Ovary (tissue), 10 donors: ENCODE measurements at regions of chr7 and their contacts with region 1.

Region 1: DNA sequence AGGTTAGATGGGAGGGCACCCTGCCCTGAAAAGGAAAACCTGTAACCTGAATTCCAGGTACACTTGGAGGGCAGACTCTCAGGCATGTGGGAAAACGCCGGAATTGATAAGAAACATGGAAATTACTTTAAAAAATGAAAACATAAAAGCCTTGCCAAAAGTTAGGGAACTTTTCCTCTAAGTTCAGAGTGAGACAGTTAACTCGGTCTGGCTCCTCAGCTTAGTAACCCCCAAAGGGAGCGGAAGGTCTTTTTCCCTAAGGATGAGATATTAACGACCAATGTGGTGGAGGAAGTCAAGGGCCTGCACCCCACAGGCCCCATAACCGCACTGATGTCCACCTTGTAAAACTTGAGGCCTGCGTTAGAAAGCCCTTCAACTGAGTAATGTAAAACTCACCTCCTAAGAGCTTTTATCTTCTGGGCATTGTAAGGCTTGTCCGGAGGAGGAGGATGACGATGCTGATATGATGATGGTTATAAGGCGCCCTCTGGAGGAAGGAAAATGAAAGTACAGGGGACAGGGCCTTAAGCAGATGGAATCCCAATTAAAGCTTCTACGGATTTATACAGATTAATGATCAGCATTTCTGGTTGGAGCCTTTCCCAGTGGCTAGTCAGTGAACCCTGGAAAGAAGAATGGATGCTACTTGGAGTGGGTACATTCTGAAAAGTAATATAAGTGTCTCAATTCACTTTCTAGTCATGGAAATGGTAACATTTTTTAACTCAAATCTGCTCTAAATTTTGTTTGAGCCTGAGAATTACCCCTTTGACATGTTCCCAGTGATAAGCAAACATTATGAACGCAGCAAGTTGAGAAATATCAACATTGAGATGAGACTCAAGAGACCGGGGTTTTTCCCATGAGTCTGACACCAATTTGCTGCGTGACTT is 694 bp downstream of the COL1A2 start:
- DNase-seq: peak; percentile 48 to 80 (median 55)
- H3K4me3 ChIP-seq: peak overlapping the region; percentile 57
- H3K27ac ChIP-seq: peak overlapping the region; percentile 61 to 93
- H3K4me1 ChIP-seq: peaks cover 5% of the 10 kb centered on the region
- H3K27me3 ChIP-seq: no peaks in the 10 kb centered on the region
- CTCF ChIP-seq: peak; percentile 75 to 96 (median 87)
- EP300 ChIP-seq: peak; percentile 13
- POLR2A ChIP-seq: no peak

Region 2: DNA sequence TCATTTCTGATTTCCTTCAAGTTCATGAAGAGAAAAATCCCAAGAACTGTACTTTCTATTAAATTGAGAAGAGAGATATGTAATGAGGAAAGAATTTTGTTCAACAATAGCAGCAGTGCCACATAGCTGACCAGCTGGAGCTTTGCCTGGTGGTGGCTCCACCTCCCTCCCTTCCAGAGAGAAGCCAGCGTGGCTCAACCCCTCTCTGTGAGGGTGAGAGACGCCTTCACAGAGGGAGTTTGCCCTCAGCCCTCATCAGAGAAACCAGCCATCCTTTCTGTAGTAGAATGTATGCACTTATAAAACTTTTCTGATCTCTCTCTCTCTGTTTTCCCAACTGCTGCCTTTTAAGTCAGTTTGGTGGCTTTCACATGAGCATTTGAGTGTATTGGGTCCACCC is 21.2 kb before region 1 on chr7:
- intact Hi-C with region 1: loop called in 1 of 4 experiments (anchors 2 kb)
- DNase-seq: peak; percentile 80 to 90 (median 87)
- H3K4me3 ChIP-seq: no peak overlapping the region
- H3K27ac ChIP-seq: peak overlapping the region; percentile 40 to 87
- H3K4me1 ChIP-seq: peaks cover 20% of the 10 kb centered on the region
- H3K27me3 ChIP-seq: no peaks in the 10 kb centered on the region
- CTCF ChIP-seq: no peak
- EP300 ChIP-seq: no peak
- POLR2A ChIP-seq: no peak